Activated CD4-positive, alpha-beta memory T cell treated with anti-CD3 and anti-CD28 coated beads, Interleukin-2, amount 10 ng/mL, durations not matched to agents 7 days and 5 days (primary cell): ENCODE measurements at regions of chr1 and their contacts with region 1.

Region 1: DNA sequence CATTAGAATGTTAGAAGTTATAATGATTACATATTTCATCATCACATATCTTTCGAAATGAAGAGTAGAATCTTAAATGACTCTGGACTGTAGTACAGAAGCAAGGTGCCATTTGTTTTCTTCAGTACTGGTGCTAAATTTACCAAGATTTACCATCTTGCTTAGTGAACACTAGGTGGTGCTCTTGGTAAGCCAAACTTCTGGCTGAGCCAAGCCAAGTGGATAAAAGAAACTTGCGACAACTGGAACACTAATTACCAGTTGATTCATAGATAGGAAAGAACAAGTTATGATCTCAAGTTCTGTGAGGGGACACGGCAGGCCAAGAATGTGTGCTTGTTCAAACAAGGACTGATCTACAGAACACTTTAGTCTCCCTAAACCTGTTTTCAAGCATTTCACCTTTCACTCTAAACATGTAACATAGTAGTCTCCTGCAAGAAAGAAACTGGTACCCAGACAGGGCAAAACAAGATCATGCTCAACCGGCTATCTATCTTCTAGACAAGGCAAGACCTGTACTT is 19.8 kb downstream of the SPRTN start:
- DNase-seq: peak; percentile 33
- H3K4me3 Mint-ChIP-seq: no peak overlapping the region
- H3K27ac Mint-ChIP-seq: no peak overlapping the region
- H3K4me1 Mint-ChIP-seq: peaks cover 6% of the 10 kb centered on the region
- H3K27me3 Mint-ChIP-seq: no peaks in the 10 kb centered on the region

Region 2: GRCh38 chr1:231028682-231029081 is 329.2 kb before region 1 on chr1:
- CTCF ChIA-PET with region 1: no interaction called
- POLR2A ChIA-PET with region 1: no interaction called
- DNase-seq: no peak
- H3K4me3 Mint-ChIP-seq: no peak overlapping the region
- H3K27ac Mint-ChIP-seq: no peak overlapping the region
- H3K4me1 Mint-ChIP-seq: no peaks in the 10 kb centered on the region
- H3K27me3 Mint-ChIP-seq: no peaks in the 10 kb centered on the region

Region 3: GRCh38 chr1:231177936-231178335 is 180.0 kb before region 1 on chr1:
- CTCF ChIA-PET with region 1: no interaction called
- POLR2A ChIA-PET with region 1: no interaction called
- DNase-seq: no peak
- H3K4me3 Mint-ChIP-seq: no peak overlapping the region
- H3K27ac Mint-ChIP-seq: no peak overlapping the region
- H3K4me1 Mint-ChIP-seq: no peaks in the 10 kb centered on the region
- H3K27me3 Mint-ChIP-seq: peaks cover 51% of the 10 kb centered on the region

Region 4: GRCh38 chr1:231278100-231278790 is 79.6 kb before region 1 on chr1:
- CTCF ChIA-PET with region 1: no interaction called
- POLR2A ChIA-PET with region 1: no interaction called
- DNase-seq: no peak
- H3K4me3 Mint-ChIP-seq: no peak overlapping the region
- H3K27ac Mint-ChIP-seq: no peak overlapping the region
- H3K4me1 Mint-ChIP-seq: peaks cover 10% of the 10 kb centered on the region
- H3K27me3 Mint-ChIP-seq: no peaks in the 10 kb centered on the region

Region 5: GRCh38 chr1:231383159-231383860 is 25.4 kb after region 1 on chr1:
- CTCF ChIA-PET with region 1: no interaction called
- POLR2A ChIA-PET with region 1: no interaction called
- DNase-seq: no peak
- H3K4me3 Mint-ChIP-seq: no peak overlapping the region
- H3K27ac Mint-ChIP-seq: no peak overlapping the region
- H3K4me1 Mint-ChIP-seq: peaks cover 23% of the 10 kb centered on the region
- H3K27me3 Mint-ChIP-seq: no peaks in the 10 kb centered on the region

Region 6: DNA sequence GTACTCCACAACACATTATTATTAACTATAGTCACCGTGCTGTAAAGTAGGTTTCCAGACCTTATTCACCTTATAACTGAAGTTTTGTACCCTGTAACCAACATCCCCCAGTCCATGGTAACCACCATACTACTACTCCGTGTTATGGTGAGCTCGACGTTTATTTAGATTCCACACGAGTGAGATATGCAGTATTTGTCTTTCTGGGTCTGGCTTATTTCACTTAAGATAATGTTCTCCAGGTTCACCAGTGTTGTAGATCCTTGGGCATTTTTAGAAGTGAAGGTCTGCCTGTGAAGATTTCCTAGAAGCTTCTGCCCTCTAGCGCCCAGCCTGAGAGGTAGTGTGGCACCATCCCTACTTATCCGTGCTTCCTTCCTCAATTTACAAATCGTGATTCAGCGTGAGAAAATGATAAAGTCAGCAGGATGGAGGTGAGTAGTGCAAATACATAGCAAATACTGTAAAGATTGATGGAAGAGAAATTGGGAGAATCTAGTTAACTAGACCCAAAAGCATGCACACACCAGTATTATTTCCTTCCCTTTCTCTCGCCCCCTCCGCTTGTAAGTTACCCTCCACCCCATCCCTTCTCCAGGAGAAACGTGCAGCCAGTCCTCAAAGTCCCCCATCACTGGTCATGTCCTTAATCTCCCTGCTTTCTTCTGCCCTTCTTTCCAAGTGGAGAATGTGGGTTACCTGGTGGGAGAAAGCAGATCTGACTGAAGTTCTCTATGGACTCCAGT is 232.7 kb after region 1 on chr1:
- CTCF ChIA-PET with region 1: interaction called, 16 read pairs
- POLR2A ChIA-PET with region 1: interaction called, 3 read pairs
- DNase-seq: peak; percentile 55
- H3K4me3 Mint-ChIP-seq: no peak overlapping the region
- H3K27ac Mint-ChIP-seq: no peak overlapping the region
- H3K4me1 Mint-ChIP-seq: peaks cover 4% of the 10 kb centered on the region
- H3K27me3 Mint-ChIP-seq: peaks cover 2% of the 10 kb centered on the region

Region 7: GRCh38 chr1:231603598-231604275 is 245.8 kb after region 1 on chr1:
- CTCF ChIA-PET with region 1: interaction called, 37 read pairs
- POLR2A ChIA-PET with region 1: interaction called, 3 read pairs
- DNase-seq: peak; percentile 49
- H3K4me3 Mint-ChIP-seq: peak overlapping the region; percentile 90
- H3K27ac Mint-ChIP-seq: peak overlapping the region; percentile 77
- H3K4me1 Mint-ChIP-seq: peaks cover 17% of the 10 kb centered on the region
- H3K27me3 Mint-ChIP-seq: peaks cover 9% of the 10 kb centered on the region